HCT116 (cell line): ENCODE measurements at regions of chr2 and their contacts with region 1.

Region 1: GRCh38 chr2:185279999-185280398 is 458.6 kb upstream of the FSIP2 start:
- DNase-seq: no peak
- ATAC-seq: no peak
- H3K4me3 ChIP-seq: no peak overlapping the region
- H3K27ac ChIP-seq: no peak overlapping the region
- H3K4me1 ChIP-seq: no peaks in the 10 kb centered on the region
- H3K27me3 ChIP-seq: no peaks in the 10 kb centered on the region
- CTCF ChIP-seq: peak; percentile 40 to 64 (median 45); a peak in 5 of 6 replicates
- POLR2A ChIP-seq: no peak
- RAD21 ChIP-seq: peak; percentile 63

Region 2: DNA sequence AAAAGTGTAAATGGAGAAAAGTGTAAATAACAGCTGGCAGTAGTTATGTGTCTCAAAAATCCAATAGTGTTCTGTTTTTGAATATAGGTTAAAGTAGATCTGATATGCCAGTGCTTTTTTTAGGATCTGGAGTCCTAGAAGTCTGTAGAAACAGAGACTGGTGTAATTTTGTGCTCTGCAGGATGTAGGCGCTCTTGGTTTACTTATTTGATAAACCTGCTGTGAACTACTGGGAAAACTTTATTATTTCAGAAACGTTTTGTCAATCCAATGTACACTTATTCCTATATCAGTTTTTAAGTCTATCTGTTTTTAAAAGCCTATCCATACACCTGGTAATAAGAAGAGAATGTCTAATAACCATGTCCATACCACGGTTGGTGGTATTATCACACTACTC is 1212.5 kb before region 1 on chr2:
- CTCF ChIA-PET with region 1: no interaction called
- POLR2A ChIA-PET with region 1: no interaction called
- RAD21 ChIA-PET with region 1: no interaction called
- intact Hi-C with region 1: loop called (anchors 10 kb)
- DNase-seq: no peak
- ATAC-seq: peak; percentile 42; the same call in 1 of the 2 replicates
- H3K4me3 ChIP-seq: no peak overlapping the region
- H3K27ac ChIP-seq: no peak overlapping the region
- H3K4me1 ChIP-seq: no peaks in the 10 kb centered on the region
- H3K27me3 ChIP-seq: no peaks in the 10 kb centered on the region
- CTCF ChIP-seq: peak in 2 of 3 experiments; percentile 35 to 49; a peak in 4 of 6 replicates
- POLR2A ChIP-seq: no peak
- RAD21 ChIP-seq: peak; percentile 50

Region 3: GRCh38 chr2:184346338-184346862 is 933.6 kb before region 1 on chr2:
- CTCF ChIA-PET with region 1: no interaction called
- POLR2A ChIA-PET with region 1: no interaction called
- RAD21 ChIA-PET with region 1: no interaction called
- intact Hi-C with region 1: no loop called
- DNase-seq: no peak
- ATAC-seq: no peak
- H3K4me3 ChIP-seq: no peak overlapping the region
- H3K27ac ChIP-seq: no peak overlapping the region
- H3K4me1 ChIP-seq: no peaks in the 10 kb centered on the region
- H3K27me3 ChIP-seq: no peaks in the 10 kb centered on the region
- CTCF ChIP-seq: no peak
- POLR2A ChIP-seq: no peak
- RAD21 ChIP-seq: no peak

Region 4: GRCh38 chr2:184646177-184646576 is 633.8 kb before region 1 on chr2:
- CTCF ChIA-PET with region 1: no interaction called
- POLR2A ChIA-PET with region 1: no interaction called
- RAD21 ChIA-PET with region 1: no interaction called
- intact Hi-C with region 1: loop called (anchors 10 kb)
- DNase-seq: no peak
- ATAC-seq: peak; percentile 40; the same call in 1 of the 2 replicates
- H3K4me3 ChIP-seq: no peak overlapping the region
- H3K27ac ChIP-seq: no peak overlapping the region
- H3K4me1 ChIP-seq: no peaks in the 10 kb centered on the region; a peak in 1 of 4 replicates
- H3K27me3 ChIP-seq: no peaks in the 10 kb centered on the region
- CTCF ChIP-seq: no peak
- POLR2A ChIP-seq: no peak
- RAD21 ChIP-seq: no peak

Region 5: DNA sequence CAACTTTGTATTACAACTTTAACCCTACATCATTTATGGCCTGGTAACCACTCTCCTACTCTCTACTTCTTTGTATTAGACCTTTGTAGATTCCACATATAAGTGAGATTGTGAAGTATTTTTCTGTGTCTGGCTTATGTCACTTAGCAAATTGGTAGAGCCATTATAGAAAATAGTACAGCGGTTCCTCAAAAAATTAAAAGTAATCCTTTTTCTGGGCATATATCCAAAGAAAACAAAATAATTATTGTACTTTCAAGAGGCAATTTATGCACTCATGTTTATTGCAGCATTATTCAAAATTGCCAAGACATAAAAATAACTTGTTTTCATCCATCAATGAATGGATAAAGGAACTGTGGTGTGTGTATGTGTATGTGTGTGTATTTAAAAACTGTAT is 78.9 kb before region 1 on chr2:
- CTCF ChIA-PET with region 1: no interaction called
- POLR2A ChIA-PET with region 1: no interaction called
- RAD21 ChIA-PET with region 1: no interaction called
- intact Hi-C with region 1: no loop called
- DNase-seq: no peak
- ATAC-seq: no peak
- H3K4me3 ChIP-seq: no peak overlapping the region
- H3K27ac ChIP-seq: no peak overlapping the region
- H3K4me1 ChIP-seq: no peaks in the 10 kb centered on the region
- H3K27me3 ChIP-seq: no peaks in the 10 kb centered on the region
- CTCF ChIP-seq: no peak
- POLR2A ChIP-seq: no peak
- RAD21 ChIP-seq: no peak

Region 6: DNA sequence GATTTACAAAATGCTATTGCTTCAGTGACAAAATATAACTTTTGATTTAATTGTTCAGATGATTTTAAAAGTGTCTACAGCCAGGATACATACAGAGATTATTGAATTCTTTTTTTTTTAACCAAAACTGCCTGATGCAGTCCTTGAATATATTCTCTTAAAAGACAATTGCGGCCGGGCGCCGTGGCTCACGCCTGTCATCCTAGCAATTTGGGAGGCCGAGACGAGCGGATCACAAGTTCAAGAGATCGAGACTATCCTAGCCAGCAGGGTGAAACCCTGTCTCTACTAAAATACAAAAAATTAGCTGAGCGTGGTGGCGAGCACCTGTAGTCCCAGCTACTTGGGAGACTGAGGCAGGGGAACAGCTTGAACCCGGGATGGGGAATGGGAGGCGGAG is 38.4 kb before region 1 on chr2:
- CTCF ChIA-PET with region 1: no interaction called
- POLR2A ChIA-PET with region 1: no interaction called
- RAD21 ChIA-PET with region 1: no interaction called
- intact Hi-C with region 1: no loop called
- DNase-seq: no peak
- ATAC-seq: no peak
- H3K4me3 ChIP-seq: no peak overlapping the region
- H3K27ac ChIP-seq: no peak overlapping the region
- H3K4me1 ChIP-seq: no peaks in the 10 kb centered on the region
- H3K27me3 ChIP-seq: no peaks in the 10 kb centered on the region
- CTCF ChIP-seq: no peak
- POLR2A ChIP-seq: no peak
- RAD21 ChIP-seq: no peak

Region 7: GRCh38 chr2:185335879-185336278 is 55.9 kb after region 1 on chr2:
- CTCF ChIA-PET with region 1: no interaction called
- POLR2A ChIA-PET with region 1: no interaction called
- RAD21 ChIA-PET with region 1: no interaction called
- intact Hi-C with region 1: no loop called
- DNase-seq: no peak
- ATAC-seq: no peak
- H3K4me3 ChIP-seq: no peak overlapping the region
- H3K27ac ChIP-seq: no peak overlapping the region
- H3K4me1 ChIP-seq: no peaks in the 10 kb centered on the region
- H3K27me3 ChIP-seq: no peaks in the 10 kb centered on the region
- CTCF ChIP-seq: no peak
- POLR2A ChIP-seq: no peak
- RAD21 ChIP-seq: no peak